ENCODE measurements at regions of chr20 and their contacts with region 1.

Region 1: DNA sequence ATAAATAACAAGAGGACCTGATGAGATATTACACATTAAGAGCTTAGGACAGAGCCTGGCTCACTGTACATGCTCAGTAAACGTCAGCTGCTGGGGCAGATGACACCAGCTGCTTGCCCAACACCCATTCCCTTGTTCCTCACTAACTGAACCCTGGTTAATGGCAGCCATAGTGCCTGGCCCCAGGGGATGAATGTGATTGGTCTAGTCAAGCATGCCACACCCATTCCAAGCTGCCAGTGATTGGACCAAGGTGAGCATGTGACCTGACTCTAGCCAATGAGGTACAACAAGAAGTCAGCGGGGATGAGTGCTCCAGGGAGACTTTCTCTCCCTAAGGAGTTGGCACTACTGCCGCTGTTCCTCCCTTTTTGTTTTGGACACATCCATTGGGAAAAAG is 85.1 kb upstream of the PTPN1 start:
- DNase-seq: no peak

Region 2: GRCh38 chr20:48597405-48598302 is 1827.4 kb before region 1 on chr20:
- intact Hi-C with region 1: no loop called
- DNase-seq: peak; percentile 78

Region 3: DNA sequence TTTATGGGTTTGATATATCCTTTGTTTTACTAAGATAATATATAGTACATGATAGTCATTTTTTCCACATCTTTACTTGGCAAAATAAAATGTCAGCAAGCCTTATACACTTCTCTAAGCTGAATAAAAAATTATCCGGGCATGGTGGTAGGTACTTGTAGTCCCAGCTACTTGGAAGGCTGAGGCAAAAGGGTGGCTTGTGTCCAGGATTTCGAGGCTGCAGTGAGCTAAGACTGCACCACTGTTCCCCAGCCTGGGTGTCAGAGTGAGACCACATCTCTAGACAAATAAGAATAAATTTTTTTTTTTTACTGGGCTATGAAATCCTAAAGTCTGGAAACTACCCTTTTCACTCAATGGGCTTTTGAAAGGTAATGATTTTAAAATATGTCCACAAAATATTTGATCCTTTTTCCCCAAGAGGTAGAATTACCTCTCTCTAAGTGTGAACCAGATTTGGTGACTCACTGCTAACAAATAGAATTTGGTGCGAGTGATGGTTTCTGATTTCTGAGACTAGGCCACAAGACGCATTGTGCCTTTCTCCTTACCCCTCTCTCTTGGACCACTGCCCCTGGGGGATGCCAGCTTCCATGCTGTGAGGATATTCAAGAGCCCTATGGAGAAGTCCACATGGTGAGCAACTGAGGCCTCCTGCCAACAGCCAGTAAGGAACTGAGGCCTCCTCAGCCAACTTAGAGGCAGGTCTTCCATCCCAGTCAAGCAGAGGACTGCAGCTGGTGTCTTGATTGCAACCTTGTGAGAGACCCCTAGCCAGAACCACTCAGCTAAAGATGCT is 1063.0 kb before region 1 on chr20:
- intact Hi-C with region 1: loop called in 1 of 2 experiments (anchors 5 kb)
- DNase-seq: no peak

Region 4: GRCh38 chr20:49909499-49910339 is 515.4 kb before region 1 on chr20:
- intact Hi-C with region 1: no loop called
- DNase-seq: peak; percentile 66

Measured in posterior vena cava (tissue), 2 donors.